ENCODE measurements at regions of chr2 and their contacts with region 1.

Region 1: GRCh38 chr2:61135510-61135909 is 26.5 kb upstream of the C2orf74 start:
- DNase-seq: peak; percentile 43
- H3K4me3 ChIP-seq: no peak overlapping the region
- H3K27ac ChIP-seq: no peak overlapping the region
- H3K4me1 ChIP-seq: no peaks in the 10 kb centered on the region; a peak in 1 of 4 replicates
- H3K27me3 ChIP-seq: no peaks in the 10 kb centered on the region
- CTCF ChIP-seq: peak; percentile 66
- EP300 ChIP-seq: no peak
- RAD21 ChIP-seq: peak; percentile 90

Region 2: DNA sequence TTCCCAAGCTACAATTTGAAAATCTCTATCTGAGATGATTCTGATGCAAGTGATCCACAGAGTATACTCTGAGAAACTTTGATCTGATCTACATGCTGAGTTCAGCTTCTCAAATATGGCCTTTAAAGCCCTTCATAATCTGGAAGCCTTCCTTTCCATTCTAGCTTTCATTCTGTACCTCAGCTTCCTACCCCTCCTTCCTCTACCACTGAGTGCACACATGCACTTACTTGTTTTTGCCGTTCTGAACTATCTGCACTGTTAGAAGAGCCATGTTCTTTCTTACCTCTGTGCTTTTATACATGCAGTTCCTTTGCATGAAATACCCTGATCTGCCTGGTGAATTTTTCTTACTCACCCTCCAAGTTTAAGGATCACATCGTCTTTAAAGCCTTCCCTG is 229.1 kb before region 1 on chr2:
- CTCF ChIA-PET with region 1: no interaction called
- POLR2A ChIA-PET with region 1: no interaction called
- DNase-seq: no peak
- H3K4me3 ChIP-seq: no peak overlapping the region
- H3K27ac ChIP-seq: no peak overlapping the region
- H3K4me1 ChIP-seq: no peaks in the 10 kb centered on the region
- H3K27me3 ChIP-seq: no peaks in the 10 kb centered on the region
- CTCF ChIP-seq: no peak
- EP300 ChIP-seq: no peak
- RAD21 ChIP-seq: no peak

Region 3: GRCh38 chr2:61029533-61029932 is 106.0 kb before region 1 on chr2:
- CTCF ChIA-PET with region 1: no interaction called
- POLR2A ChIA-PET with region 1: no interaction called
- DNase-seq: no peak
- H3K4me3 ChIP-seq: no peak overlapping the region
- H3K27ac ChIP-seq: no peak overlapping the region
- H3K4me1 ChIP-seq: no peaks in the 10 kb centered on the region; a peak in 1 of 4 replicates
- H3K27me3 ChIP-seq: no peaks in the 10 kb centered on the region
- CTCF ChIP-seq: no peak
- EP300 ChIP-seq: no peak
- RAD21 ChIP-seq: no peak

Region 4: GRCh38 chr2:61044636-61045035 is 90.9 kb before region 1 on chr2:
- CTCF ChIA-PET with region 1: no interaction called
- POLR2A ChIA-PET with region 1: no interaction called
- DNase-seq: no peak
- H3K4me3 ChIP-seq: no peak overlapping the region
- H3K27ac ChIP-seq: no peak overlapping the region
- H3K4me1 ChIP-seq: no peaks in the 10 kb centered on the region
- H3K27me3 ChIP-seq: no peaks in the 10 kb centered on the region
- CTCF ChIP-seq: no peak
- EP300 ChIP-seq: no peak
- RAD21 ChIP-seq: no peak

Region 5: GRCh38 chr2:61117534-61117933 is 18.0 kb before region 1 on chr2:
- CTCF ChIA-PET with region 1: interaction called, 10 read pairs
- POLR2A ChIA-PET with region 1: interaction called, 4 read pairs
- DNase-seq: no peak
- H3K4me3 ChIP-seq: no peak overlapping the region
- H3K27ac ChIP-seq: no peak overlapping the region
- H3K4me1 ChIP-seq: peaks cover 0 to 10% of the 10 kb centered on the region in 2 experiments; a peak in 2 of 4 replicates
- H3K27me3 ChIP-seq: no peaks in the 10 kb centered on the region
- CTCF ChIP-seq: no peak
- EP300 ChIP-seq: no peak
- RAD21 ChIP-seq: no peak

Region 6: DNA sequence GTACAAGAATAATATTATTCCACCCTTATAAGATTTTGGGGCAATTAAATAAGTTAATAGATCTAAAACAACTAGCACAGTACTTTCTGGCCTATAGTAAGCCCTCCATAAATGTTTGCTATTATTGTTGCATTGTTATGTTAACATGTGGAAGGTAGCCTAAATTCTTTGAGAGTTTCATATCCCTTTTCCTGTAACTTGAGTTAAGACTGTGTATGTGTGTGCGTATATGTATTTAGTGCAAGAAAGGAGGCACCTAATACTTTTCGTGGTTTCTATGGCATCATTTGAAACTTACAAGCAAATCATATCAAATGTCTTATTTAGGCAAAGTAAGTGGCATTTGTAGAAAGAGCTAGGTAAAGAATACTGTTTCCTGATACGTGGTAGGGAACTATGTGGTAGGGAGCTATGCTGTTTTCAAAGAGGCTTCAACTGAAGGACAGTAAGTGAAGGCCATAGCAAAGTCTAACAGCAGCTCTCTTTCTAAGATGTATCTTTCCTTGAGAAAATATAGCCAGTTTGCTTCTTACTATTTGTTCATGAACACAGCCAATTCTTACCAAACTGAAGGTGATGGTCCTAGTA is 10.3 kb before region 1 on chr2:
- CTCF ChIA-PET with region 1: interaction called, 15 read pairs
- POLR2A ChIA-PET with region 1: interaction called, 4 read pairs
- DNase-seq: no peak
- H3K4me3 ChIP-seq: no peak overlapping the region
- H3K27ac ChIP-seq: no peak overlapping the region
- H3K4me1 ChIP-seq: peaks cover 0 to 10% of the 10 kb centered on the region in 2 experiments; a peak in 2 of 4 replicates
- H3K27me3 ChIP-seq: no peaks in the 10 kb centered on the region
- CTCF ChIP-seq: no peak
- EP300 ChIP-seq: no peak
- RAD21 ChIP-seq: no peak

Region 7: GRCh38 chr2:61658841-61659780 is 523.6 kb after region 1 on chr2:
- CTCF ChIA-PET with region 1: interaction called, 11 read pairs
- POLR2A ChIA-PET with region 1: no interaction called
- DNase-seq: peak; percentile 47
- H3K4me3 ChIP-seq: no peak overlapping the region
- H3K27ac ChIP-seq: peak overlapping the region in 1 of 2 experiments; percentile 25; a peak in 1 of 4 replicates
- H3K4me1 ChIP-seq: peaks cover 3 to 9% of the 10 kb centered on the region in 2 experiments; a peak in 2 of 4 replicates
- H3K27me3 ChIP-seq: no peaks in the 10 kb centered on the region
- CTCF ChIP-seq: peak; percentile 71
- EP300 ChIP-seq: no peak
- RAD21 ChIP-seq: peak; percentile 73